Transverse colon (tissue), 4 donors: ENCODE measurements at regions of chr17 and their contacts with region 1.

Region 1: GRCh38 chr17:45719335-45720071 is 64.6 kb upstream of the CRHR1 start:
- DNase-seq: no peak
- H3K4me3 ChIP-seq: no peak overlapping the region
- H3K27ac ChIP-seq: no peak overlapping the region
- H3K4me1 ChIP-seq: no peaks in the 10 kb centered on the region
- H3K27me3 ChIP-seq: peaks cover 58% of the 10 kb centered on the region
- CTCF ChIP-seq: no peak
- EP300 ChIP-seq: no peak
- POLR2A ChIP-seq: no peak

Region 2: DNA sequence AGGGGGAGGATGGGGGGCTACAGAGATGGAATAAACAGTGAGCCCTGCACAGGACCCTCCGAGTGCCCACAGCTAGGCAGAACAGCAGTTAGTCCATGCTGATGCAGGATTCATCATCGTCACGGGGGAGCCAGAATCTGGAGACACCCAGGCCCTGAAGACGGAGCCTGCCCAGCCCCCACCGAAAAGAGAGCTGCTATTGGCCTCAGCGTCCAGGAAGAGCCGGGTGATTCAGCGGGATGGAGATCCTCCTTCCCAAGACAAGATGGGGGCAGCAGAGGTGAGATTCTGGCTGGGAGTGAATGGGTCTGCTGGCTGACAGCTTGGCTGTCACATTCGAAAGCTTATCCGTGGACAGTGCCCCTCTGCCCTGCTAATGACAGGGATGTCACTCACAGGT is 68.9 kb before region 1 on chr17:
- in situ Hi-C with region 1: no loop called
- intact Hi-C with region 1: loop called (anchors 10 kb)
- DNase-seq: no peak
- H3K4me3 ChIP-seq: no peak overlapping the region
- H3K27ac ChIP-seq: no peak overlapping the region
- H3K4me1 ChIP-seq: no peaks in the 10 kb centered on the region
- H3K27me3 ChIP-seq: peaks cover 19% of the 10 kb centered on the region
- CTCF ChIP-seq: no peak
- EP300 ChIP-seq: no peak
- POLR2A ChIP-seq: no peak

Region 3: DNA sequence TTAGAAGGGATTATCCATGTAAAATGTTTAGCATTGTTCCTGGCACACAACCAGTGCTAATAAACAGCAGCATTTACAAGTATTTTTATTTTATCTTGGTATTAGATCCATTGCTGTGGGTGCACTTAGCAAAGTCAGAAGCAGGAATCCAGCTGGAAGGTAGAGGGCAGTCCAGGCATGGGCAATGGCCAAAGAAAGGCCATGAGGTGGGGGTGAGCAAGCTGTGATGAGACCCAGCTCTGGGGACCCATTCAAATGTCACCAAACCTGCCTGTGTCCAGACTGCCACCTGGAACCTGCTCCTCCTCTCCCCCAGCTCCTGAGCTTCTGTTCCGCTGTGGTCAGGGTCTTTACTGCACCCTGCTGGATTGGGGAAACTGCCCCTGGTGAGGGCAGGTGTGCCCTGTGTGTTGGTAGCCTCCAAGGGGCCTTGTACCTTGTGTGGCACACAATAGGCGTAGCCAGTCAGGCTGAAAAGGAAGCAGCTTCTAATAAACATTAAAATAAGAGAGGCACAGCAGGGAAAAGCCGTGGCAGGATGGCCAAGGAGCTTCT is 53.4 kb before region 1 on chr17:
- in situ Hi-C with region 1: no loop called
- intact Hi-C with region 1: no loop called
- DNase-seq: no peak
- H3K4me3 ChIP-seq: no peak overlapping the region
- H3K27ac ChIP-seq: no peak overlapping the region
- H3K4me1 ChIP-seq: no peaks in the 10 kb centered on the region
- H3K27me3 ChIP-seq: peaks cover 16% of the 10 kb centered on the region
- CTCF ChIP-seq: no peak
- EP300 ChIP-seq: no peak
- POLR2A ChIP-seq: no peak